Activated CD8-positive, alpha-beta T cell treated with anti-CD3 and anti-CD28 coated beads, Interleukin-2, amount 10 ng/mL, durations not matched to agents 7 days and 5 days (primary cell): ENCODE measurements at regions of chr1 and their contacts with region 1.

Region 1: DNA sequence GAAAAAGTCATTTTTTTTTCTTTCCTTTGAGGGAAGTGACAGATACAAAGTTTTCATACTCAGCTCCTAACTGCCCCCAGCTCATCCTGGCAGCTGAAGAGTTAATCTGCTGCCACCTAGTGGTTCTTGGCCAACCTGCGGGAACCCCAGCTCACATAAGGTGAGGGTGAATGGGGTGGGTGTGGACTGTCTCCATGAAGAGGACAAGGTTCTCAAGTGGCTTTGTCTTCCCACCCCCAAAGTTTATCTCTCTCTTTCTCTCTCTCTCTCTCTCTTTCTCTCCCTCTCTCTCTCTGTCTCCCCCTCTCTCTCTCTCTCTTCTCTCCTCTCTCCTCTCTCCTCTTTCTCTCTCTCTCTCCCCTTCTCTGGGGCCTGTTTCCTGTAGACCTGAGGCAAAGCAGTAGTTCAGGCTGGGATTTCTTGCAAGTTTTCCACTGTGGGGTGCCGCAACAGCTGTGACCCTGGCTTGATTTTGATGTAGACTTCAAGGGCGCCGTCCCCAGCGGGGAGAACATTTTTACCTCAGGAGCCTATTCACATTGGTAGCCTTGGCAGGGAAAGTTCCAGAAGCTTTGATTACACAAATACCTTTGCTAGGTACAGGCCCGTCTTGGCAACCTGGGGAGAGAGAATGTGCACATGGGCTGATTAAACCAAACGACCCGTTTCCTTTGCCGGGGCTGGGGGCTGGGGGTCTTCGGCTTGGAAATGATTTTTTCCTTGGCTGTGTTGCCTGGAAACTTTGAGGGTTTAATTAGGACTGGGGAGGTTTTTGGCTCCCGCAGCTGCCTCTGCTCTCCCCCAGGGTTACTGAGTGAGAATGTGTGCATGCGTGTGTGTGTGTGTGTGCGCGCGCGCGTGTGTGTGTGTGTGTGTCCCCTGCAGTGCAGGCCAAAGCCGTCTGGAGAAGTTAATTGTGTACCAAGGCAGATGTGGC is 135.9 kb downstream of the TM2D1 start:
- DNase-seq: peak; percentile 81
- ATAC-seq: peak; percentile 99
- H3K4me3 Mint-ChIP-seq: no peak overlapping the region
- H3K27ac Mint-ChIP-seq: no peak overlapping the region
- H3K4me1 Mint-ChIP-seq: peaks cover 4% of the 10 kb centered on the region
- H3K27me3 Mint-ChIP-seq: peaks cover 7% of the 10 kb centered on the region

Region 2: DNA sequence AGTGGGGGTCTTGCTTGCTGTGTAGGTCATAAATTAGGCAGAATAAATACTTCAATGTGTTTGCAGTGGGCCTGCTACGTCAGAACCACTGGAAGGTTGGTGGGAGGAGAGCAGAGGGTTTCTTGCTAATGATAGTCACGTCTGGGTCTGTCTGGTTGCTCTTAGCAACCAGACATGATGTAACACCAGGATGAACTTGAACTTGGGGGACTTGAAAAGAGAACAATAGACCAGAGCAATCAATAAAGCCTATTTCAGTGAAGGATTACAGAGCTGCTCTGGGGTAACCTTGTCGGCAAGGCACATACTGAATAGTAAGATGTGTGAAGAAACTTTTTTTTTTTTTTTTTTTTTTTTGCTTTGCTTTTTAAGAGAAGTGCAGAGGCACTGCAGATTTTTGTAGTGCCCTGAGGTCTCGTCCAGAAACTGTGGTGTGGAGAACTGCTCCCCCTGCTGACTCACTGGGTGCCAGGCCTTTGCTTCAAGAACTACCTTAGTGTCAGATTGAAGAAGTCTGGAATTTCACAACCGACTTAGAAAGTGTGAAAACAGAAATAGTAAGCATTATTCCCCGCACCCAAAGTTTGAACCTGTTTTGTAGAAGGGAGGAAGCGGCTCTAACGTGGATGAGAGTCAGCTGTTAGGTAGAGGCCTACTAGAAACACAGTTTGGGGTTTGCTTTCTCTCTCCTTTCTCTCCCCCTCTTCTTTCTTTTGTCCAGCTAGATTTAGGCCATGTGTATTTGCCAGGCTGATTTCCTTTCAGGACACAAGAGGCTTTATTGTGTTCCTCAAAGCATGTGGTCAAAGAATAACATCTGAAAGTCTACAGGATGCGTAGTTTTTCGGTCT is 135.7 kb before region 1 on chr1:
- CTCF ChIA-PET with region 1: interaction called, 10 read pairs
- POLR2A ChIA-PET with region 1: no interaction called
- DNase-seq: peak; percentile 76
- ATAC-seq: peak; percentile 84
- H3K4me3 Mint-ChIP-seq: no peak overlapping the region
- H3K27ac Mint-ChIP-seq: peak overlapping the region; percentile 30
- H3K4me1 Mint-ChIP-seq: peaks cover 9% of the 10 kb centered on the region
- H3K27me3 Mint-ChIP-seq: peaks cover 3% of the 10 kb centered on the region

Region 3: GRCh38 chr1:61552630-61553305 is 36.2 kb before region 1 on chr1:
- CTCF ChIA-PET with region 1: interaction called, 20 read pairs
- POLR2A ChIA-PET with region 1: no interaction called
- DNase-seq: no peak
- ATAC-seq: no peak
- H3K4me3 Mint-ChIP-seq: no peak overlapping the region
- H3K27ac Mint-ChIP-seq: no peak overlapping the region
- H3K4me1 Mint-ChIP-seq: peaks cover 11% of the 10 kb centered on the region
- H3K27me3 Mint-ChIP-seq: peaks cover 12% of the 10 kb centered on the region

Region 4: DNA sequence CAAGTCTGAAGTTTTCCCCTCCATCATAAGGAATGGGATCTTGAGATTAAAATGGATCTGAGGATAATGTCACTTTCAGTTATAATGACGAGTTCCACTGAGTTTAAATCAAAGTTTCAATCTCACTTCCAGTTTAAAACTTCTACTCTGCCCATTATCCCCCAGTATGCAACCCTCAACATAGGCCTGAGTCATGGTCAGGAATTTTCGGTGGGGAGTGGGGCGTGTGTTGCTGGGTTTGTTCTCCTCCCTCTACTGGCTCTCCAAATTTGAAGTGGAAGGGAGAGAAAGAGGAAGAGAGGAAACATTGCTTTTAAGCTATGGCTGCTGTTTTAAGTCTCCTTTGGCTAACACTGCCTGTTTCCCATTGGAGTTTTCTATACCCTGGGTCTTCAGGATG is 17.0 kb before region 1 on chr1:
- CTCF ChIA-PET with region 1: interaction called, 11 read pairs
- POLR2A ChIA-PET with region 1: no interaction called
- DNase-seq: no peak
- ATAC-seq: no peak
- H3K4me3 Mint-ChIP-seq: no peak overlapping the region
- H3K27ac Mint-ChIP-seq: no peak overlapping the region
- H3K4me1 Mint-ChIP-seq: no peaks in the 10 kb centered on the region
- H3K27me3 Mint-ChIP-seq: peaks cover 28% of the 10 kb centered on the region